T-cell (primary cell): ENCODE measurements at regions of chr22 and their contacts with region 1.

Region 1: GRCh38 chr22:40334899-40335298 is 11.4 kb upstream of the ADSL start:
- DNase-seq: peak in 1 of 35 experiments; percentile 63
- ATAC-seq: peak; percentile 44 to 66 (median 60)
- H3K4me3 ChIP-seq: no peak overlapping the region
- H3K4me3 Mint-ChIP-seq: peak overlapping the region; percentile 32 to 61 (median 58)
- H3K27ac ChIP-seq: peak overlapping the region; percentile 55
- H3K27ac Mint-ChIP-seq: peak overlapping the region; percentile 85 to 96
- H3K4me1 ChIP-seq: peaks cover 54 to 64% of the 10 kb centered on the region in 2 experiments
- H3K4me1 Mint-ChIP-seq: peaks cover 79 to 99% (median 86%) of the 10 kb centered on the region in 3 donors
- H3K27me3 ChIP-seq: no peaks in the 10 kb centered on the region
- H3K27me3 Mint-ChIP-seq: no peaks in the 10 kb centered on the region

Region 2: DNA sequence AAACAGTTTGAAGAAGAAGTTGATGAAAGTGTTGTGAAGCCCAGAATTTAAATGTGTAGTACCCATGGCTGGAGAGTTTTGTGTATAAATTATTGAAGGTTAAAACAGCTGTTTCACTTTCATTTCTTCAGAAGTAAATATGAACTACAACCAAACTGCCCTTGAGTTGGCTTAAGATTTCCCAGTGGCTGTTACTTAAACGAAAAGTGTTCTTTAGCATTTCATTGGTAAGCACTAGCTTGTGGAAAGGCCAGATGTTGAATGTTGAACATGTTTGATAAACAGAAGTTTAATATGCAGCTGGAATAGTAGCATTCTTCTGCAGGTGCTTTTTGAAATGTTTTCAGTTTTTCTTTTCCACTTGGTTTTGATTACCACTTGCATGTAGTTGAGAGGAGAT is 240.4 kb before region 1 on chr22:
- CTCF ChIA-PET with region 1: no interaction called
- POLR2A ChIA-PET with region 1: no interaction called
- DNase-seq: peak in 1 of 35 experiments; percentile 33
- ATAC-seq: peak in 1 of 4 experiments; percentile 51
- H3K4me3 ChIP-seq: no peak overlapping the region
- H3K4me3 Mint-ChIP-seq: peak overlapping the region; percentile 46 to 56 (median 50)
- H3K27ac ChIP-seq: no peak overlapping the region
- H3K27ac Mint-ChIP-seq: peak overlapping the region; percentile 32 to 52
- H3K4me1 ChIP-seq: peaks cover 16 to 37% of the 10 kb centered on the region in 2 experiments
- H3K4me1 Mint-ChIP-seq: peaks cover 75 to 79% (median 76%) of the 10 kb centered on the region in 3 donors
- H3K27me3 ChIP-seq: no peaks in the 10 kb centered on the region
- H3K27me3 Mint-ChIP-seq: no peaks in the 10 kb centered on the region

Region 3: GRCh38 chr22:40156001-40156516 is 178.8 kb before region 1 on chr22:
- CTCF ChIA-PET with region 1: interaction called in 1 of 2 experiments, 11 read pairs
- POLR2A ChIA-PET with region 1: no interaction called
- DNase-seq: peak in 1 of 35 experiments; percentile 16
- ATAC-seq: peak in 2 of 4 experiments; percentile 30 to 32
- H3K4me3 ChIP-seq: no peak overlapping the region
- H3K4me3 Mint-ChIP-seq: no peak overlapping the region
- H3K27ac ChIP-seq: no peak overlapping the region
- H3K27ac Mint-ChIP-seq: peak overlapping the region; percentile 57 to 61
- H3K4me1 ChIP-seq: no peaks in the 10 kb centered on the region
- H3K4me1 Mint-ChIP-seq: peaks cover 16 to 23% (median 21%) of the 10 kb centered on the region in 3 donors
- H3K27me3 ChIP-seq: no peaks in the 10 kb centered on the region
- H3K27me3 Mint-ChIP-seq: no peaks in the 10 kb centered on the region

Region 4: DNA sequence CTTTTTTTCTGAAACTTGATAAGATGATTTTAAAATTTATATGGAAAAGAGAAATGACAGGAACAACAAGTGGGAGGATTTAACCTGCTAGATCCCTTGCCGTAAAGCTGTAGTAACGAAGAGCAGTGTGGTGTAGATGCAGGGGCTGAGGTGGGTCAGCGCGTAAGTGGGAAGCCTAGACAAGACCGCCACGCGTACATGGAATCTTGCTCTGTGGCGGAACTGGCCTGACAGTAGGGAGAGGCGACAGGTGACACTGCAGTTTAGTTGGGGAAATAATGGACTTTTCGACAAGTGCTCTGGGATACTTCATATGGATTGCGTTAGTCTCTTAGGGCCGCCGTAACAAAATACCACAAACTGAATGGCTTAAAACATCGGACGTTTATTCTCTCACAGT is 128.3 kb before region 1 on chr22:
- CTCF ChIA-PET with region 1: no interaction called
- POLR2A ChIA-PET with region 1: no interaction called
- DNase-seq: no peak
- ATAC-seq: no peak
- H3K4me3 ChIP-seq: no peak overlapping the region
- H3K4me3 Mint-ChIP-seq: no peak overlapping the region
- H3K27ac ChIP-seq: no peak overlapping the region
- H3K27ac Mint-ChIP-seq: peak overlapping the region in 1 of 2 donors; percentile 1
- H3K4me1 ChIP-seq: peaks cover 43 to 44% of the 10 kb centered on the region in 2 experiments
- H3K4me1 Mint-ChIP-seq: peaks cover 67 to 85% (median 83%) of the 10 kb centered on the region in 3 donors
- H3K27me3 ChIP-seq: no peaks in the 10 kb centered on the region
- H3K27me3 Mint-ChIP-seq: no peaks in the 10 kb centered on the region

Region 5: DNA sequence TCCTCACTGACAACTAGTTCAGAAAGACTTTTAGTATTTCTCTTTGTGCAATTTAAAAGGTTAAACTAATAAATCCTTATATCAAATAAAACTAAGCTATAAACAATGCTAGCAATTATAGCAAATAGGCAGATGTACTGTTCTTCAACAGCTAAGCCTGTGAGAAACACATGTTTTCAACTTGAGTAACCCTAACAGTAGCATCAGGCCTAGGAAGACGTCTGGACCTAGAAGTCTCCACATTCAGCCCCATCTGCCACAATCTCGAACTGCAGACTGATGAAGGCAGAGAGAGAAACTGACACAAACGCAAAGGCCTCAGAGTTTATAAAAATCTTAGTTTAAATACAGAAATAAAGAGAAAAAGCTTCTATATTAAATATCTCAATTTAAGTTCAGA is 519.1 kb after region 1 on chr22:
- CTCF ChIA-PET with region 1: interaction called in 1 of 2 experiments, 10 read pairs
- POLR2A ChIA-PET with region 1: no interaction called
- DNase-seq: no peak
- ATAC-seq: no peak
- H3K4me3 ChIP-seq: no peak overlapping the region
- H3K4me3 Mint-ChIP-seq: peak overlapping the region; percentile 31 to 98 (median 36)
- H3K27ac ChIP-seq: no peak overlapping the region
- H3K27ac Mint-ChIP-seq: peak overlapping the region in 1 of 2 donors; percentile 61
- H3K4me1 ChIP-seq: peaks cover 16 to 29% of the 10 kb centered on the region in 2 experiments
- H3K4me1 Mint-ChIP-seq: peaks cover 64 to 69% (median 67%) of the 10 kb centered on the region in 3 donors
- H3K27me3 ChIP-seq: no peaks in the 10 kb centered on the region
- H3K27me3 Mint-ChIP-seq: no peaks in the 10 kb centered on the region